ENCODE measurements at regions of chr6 and their contacts with region 1.

Region 1: DNA sequence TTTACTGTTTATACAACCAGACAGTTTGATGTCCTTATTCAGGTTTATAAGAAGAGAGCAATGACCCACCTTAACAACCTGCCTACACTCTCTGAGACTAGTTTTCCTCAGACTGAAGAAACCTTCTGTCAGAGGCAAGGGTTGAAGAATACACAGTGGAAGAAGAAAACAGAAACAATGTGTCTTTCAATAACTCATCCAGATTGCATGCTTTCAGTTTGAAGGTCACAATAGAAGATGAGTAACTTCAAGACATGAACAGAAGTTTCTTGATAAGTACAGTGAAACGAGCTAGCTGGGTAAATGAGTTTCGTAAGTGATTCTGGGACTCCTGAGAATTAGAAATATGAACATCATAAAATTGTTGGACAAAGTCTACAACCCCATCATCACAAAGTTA is 141.7 kb downstream of the STXBP5 start:
- DNase-seq: no peak
- ATAC-seq: no peak
- H3K4me3 ChIP-seq: no peak overlapping the region
- H3K27ac ChIP-seq: no peak overlapping the region
- H3K4me1 ChIP-seq: no peaks in the 10 kb centered on the region
- H3K27me3 ChIP-seq: no peaks in the 10 kb centered on the region
- CTCF ChIP-seq: no peak

Region 2: DNA sequence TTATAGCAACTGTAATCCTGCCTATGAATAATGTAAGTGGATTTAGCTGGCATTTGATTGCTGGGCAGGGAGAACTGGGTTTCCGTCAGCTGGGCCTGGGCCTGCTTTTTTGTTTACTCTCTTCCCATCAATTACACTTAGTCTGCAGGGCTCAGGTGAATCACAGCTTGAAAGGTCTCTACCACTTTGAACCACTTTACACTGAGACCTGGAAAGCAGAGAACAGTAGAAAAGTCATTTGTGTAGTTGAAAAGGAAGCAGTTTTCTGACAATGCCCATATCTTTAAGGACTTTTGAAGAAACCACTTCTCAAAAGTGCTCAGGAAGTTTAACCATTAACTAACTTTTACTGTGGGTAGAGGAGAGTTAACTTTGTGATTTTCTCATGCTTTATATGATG is 681.3 kb after region 1 on chr6:
- CTCF ChIA-PET with region 1: no interaction called
- POLR2A ChIA-PET with region 1: interaction called, 10 read pairs
- intact Hi-C with region 1: no loop called
- DNase-seq: peak; percentile 24
- ATAC-seq: peak; percentile 82
- H3K4me3 ChIP-seq: no peak overlapping the region
- H3K27ac ChIP-seq: no peak overlapping the region
- H3K4me1 ChIP-seq: no peaks in the 10 kb centered on the region
- H3K27me3 ChIP-seq: no peaks in the 10 kb centered on the region
- CTCF ChIP-seq: no peak